Head of caudate nucleus (tissue), 42 donors: ENCODE measurements at regions of chr11 and their contacts with region 1.

Region 1: DNA sequence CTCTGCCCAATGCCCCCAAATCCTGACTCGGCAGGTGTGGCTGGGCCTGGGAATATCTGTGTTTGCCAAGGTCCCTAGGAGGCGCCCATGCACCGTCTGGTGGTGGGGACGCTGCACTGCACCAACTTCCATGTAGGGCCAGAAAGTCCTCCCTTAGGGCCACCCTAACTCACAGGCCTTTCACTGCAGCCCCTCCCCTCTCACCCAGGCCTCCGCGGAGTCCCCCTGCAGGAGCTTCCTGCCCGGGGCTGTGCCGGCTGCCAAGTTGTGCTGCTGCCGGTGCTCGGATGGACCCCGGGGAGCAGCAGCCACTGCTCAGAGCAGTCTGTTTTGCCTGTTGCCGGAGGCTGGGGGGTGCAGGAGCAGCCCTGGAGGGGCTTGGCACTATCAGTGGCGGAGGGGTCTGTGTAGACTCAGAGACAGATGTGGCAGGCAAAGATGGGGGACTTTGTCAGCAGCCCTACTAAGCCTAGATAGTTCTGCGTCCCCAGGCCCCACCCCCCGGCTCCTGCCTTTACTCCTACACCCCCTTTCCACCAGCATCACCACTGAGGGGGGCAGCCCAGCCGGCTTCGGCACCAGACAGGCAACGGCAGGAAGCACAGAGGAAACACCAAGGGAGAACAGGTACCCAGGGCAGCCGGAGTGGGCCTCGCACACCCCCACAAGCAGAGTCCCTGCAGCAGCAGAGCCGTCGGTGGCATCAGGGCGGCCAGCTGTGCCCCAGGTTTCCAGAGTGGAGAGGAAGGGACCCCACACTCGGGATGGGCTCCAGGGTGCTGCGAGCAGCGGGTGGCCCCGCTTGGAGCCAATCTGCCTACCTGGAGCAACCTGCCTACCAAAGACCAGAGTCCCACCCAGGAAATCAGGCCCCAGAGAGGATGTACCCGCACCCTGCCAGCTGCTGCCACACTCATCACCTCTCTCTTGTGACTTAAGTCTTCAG is 124.3 kb downstream of the TRIM29 start:
- DNase-seq: peak; percentile 40 to 92 (median 78)

Region 2: DNA sequence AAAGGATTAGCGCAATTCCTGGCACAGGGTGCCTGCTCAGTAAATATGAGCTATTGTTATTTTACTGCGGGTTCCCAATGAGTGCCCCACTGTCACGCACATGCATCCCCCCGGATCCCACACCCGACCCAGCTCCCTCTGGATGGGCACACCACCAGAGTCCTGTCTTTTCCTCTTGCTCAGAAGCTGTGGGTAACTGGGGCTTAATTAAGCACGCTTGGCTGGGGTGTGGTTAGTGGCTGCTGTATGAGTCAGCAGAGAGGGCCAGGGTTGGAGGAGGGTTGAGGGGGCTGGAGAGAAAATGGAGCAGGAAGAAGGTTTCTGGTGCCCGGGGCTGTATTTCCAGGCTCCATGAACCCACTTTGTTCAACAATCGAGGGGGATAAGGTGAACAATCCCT is 254.3 kb before region 1 on chr11:
- intact Hi-C with region 1: no loop called
- DNase-seq: peak in 11 of 42 donors; percentile 17 to 72 (median 36)

Region 3: DNA sequence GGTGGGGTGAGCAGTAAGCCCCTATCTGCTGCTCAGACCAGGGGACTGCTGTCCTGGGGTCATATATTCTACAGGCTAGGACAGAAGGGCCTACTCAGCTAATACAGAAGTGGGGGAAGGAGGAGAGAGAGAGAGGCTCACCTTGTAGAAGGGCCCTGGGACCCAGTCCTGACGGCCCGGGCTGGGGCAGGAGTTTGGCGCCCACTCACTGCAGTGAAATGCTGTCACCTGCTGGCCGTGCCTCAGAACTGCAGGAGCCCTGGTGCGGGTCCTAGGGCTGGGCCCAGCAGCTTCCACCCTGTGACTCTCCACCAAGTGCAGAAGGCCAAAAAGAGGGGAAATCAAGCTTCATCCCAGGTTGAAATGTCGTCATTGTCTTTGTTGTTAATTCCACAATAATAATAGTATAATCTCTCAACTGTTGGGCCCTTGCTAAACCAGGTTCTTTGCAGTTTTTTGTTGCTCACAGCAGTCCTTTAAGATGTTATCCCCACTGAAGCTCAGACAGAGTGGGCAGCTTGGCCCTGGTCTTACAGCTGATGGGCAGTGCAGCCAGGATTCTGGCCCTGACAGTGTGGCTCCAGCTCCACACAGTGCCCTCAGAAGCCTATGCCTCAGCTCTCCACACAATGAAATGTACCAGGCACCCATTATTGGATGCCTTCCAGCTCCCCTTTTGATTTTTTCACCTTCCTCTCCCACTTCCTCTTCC is 94.7 kb after region 1 on chr11:
- intact Hi-C with region 1: loop called (anchors 5 kb)
- DNase-seq: peak; percentile 69 to 96 (median 88)